CD4-positive, alpha-beta memory T cell (primary cell): ENCODE measurements at regions of chr14 and their contacts with region 1.

Region 1: GRCh38 chr14:21092273-21093011 is 6.0 kb downstream of the ZNF219 start:
- DNase-seq: peak; percentile 86 to 91 (median 90)
- H3K4me3 ChIP-seq: no peak overlapping the region
- H3K4me3 Mint-ChIP-seq: peak overlapping the region in 2 of 8 donors; percentile 2 to 72
- H3K27ac ChIP-seq: peak overlapping the region; percentile 17
- H3K27ac Mint-ChIP-seq: peak overlapping the region in 6 of 7 donors; percentile 79 to 97 (median 94)
- H3K4me1 ChIP-seq: peaks cover 21% of the 10 kb centered on the region
- H3K4me1 Mint-ChIP-seq: peaks cover 17 to 50% (median 29%) of the 10 kb centered on the region in 4 donors
- H3K27me3 ChIP-seq: no peaks in the 10 kb centered on the region
- H3K27me3 Mint-ChIP-seq: no peaks in the 10 kb centered on the region

Region 2: DNA sequence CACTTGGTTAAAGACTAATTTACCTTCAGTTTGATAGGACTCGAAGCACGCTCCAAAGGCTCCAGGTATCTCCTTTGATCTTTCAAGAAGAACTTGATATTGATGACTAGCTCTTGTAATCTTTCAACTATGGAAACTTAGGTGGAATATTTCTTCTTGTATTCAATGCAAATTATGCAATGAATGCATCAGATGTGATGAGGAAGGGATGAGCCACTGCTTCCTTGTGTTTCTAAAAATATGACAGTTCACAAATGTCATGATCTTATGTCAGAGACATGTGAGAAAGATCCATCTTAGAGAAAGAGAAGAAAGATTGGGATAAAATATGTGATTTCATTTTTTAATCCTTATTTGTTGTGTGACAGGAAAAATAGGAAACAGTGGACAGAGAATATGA is 541.5 kb before region 1 on chr14:
- CTCF ChIA-PET with region 1: no interaction called
- POLR2A ChIA-PET with region 1: no interaction called
- intact Hi-C with region 1: no loop called
- DNase-seq: no peak
- H3K4me3 ChIP-seq: no peak overlapping the region
- H3K4me3 Mint-ChIP-seq: no peak overlapping the region
- H3K27ac ChIP-seq: no peak overlapping the region
- H3K27ac Mint-ChIP-seq: no peak overlapping the region
- H3K4me1 ChIP-seq: no peaks in the 10 kb centered on the region
- H3K4me1 Mint-ChIP-seq: no peaks in the 10 kb centered on the region
- H3K27me3 ChIP-seq: no peaks in the 10 kb centered on the region
- H3K27me3 Mint-ChIP-seq: peaks cover 2 to 3% of the 10 kb centered on the region in 2 donors

Region 3: GRCh38 chr14:21032326-21033132 is 59.9 kb before region 1 on chr14:
- CTCF ChIA-PET with region 1: interaction called, 12 read pairs
- POLR2A ChIA-PET with region 1: no interaction called
- intact Hi-C with region 1: no loop called
- DNase-seq: no peak
- H3K4me3 ChIP-seq: no peak overlapping the region
- H3K4me3 Mint-ChIP-seq: no peak overlapping the region
- H3K27ac ChIP-seq: no peak overlapping the region
- H3K27ac Mint-ChIP-seq: no peak overlapping the region
- H3K4me1 ChIP-seq: no peaks in the 10 kb centered on the region
- H3K4me1 Mint-ChIP-seq: no peaks in the 10 kb centered on the region
- H3K27me3 ChIP-seq: no peaks in the 10 kb centered on the region
- H3K27me3 Mint-ChIP-seq: peaks cover 1 to 3% of the 10 kb centered on the region in 2 donors

Region 4: GRCh38 chr14:21049271-21049673 is 43.2 kb before region 1 on chr14:
- CTCF ChIA-PET with region 1: interaction called, 14 read pairs
- POLR2A ChIA-PET with region 1: no interaction called
- intact Hi-C with region 1: no loop called
- DNase-seq: no peak
- H3K4me3 ChIP-seq: no peak overlapping the region
- H3K4me3 Mint-ChIP-seq: no peak overlapping the region
- H3K27ac ChIP-seq: no peak overlapping the region
- H3K27ac Mint-ChIP-seq: no peak overlapping the region
- H3K4me1 ChIP-seq: peaks cover 8% of the 10 kb centered on the region
- H3K4me1 Mint-ChIP-seq: peaks cover 6 to 14% (median 9%) of the 10 kb centered on the region in 4 donors
- H3K27me3 ChIP-seq: peaks cover 3% of the 10 kb centered on the region
- H3K27me3 Mint-ChIP-seq: peaks cover 3 to 8% of the 10 kb centered on the region in 2 donors

Region 5: DNA sequence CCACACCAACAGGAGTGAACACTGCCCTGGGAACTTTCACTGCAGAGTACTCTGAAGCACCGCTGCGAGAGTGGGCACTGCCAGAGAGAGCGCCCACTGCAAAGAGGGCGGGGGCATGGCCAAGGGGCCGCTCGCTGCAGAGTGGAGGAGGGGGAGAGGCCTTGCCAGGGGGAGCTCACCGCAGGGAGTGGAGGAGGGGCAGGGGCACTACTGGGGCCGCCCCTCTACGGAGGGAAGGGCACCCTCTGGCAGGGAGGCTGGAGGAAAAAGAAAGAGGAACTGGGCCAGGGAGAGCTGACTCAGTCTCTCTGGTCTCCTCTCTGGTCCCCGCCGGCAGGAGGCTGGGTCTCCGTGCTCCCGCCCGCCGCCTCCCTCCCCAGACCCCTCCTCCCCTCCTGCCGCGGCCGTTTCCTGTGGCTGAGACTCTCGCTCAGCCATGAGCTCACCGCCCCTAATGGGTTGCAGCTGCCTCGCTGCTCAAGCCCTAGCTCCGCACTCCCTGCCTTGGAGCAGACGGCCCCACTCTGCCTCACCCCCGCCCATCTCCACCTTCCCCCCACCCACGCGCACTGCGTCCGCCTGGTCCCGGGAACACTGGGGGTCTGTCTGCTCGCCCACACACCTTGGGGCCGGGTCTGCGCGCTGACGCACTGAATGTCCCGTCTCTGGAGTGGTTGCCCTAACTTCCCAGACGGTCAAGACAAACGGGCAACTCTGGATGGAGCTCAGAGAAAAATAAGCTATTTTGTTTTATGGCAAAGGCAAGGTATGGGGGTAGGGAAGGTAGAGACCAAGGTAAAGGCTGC is 21.0 kb before region 1 on chr14:
- CTCF ChIA-PET with region 1: interaction called, 119 read pairs
- POLR2A ChIA-PET with region 1: interaction called, 22 read pairs
- intact Hi-C with region 1: loop called (anchors 1 kb)
- DNase-seq: peak in 4 of 5 donors; percentile 23 to 75 (median 32)
- H3K4me3 ChIP-seq: peak overlapping the region in 1 of 2 donors; percentile 42
- H3K4me3 Mint-ChIP-seq: peak overlapping the region; percentile 80 to 90 (median 86)
- H3K27ac ChIP-seq: peak overlapping the region; percentile 25
- H3K27ac Mint-ChIP-seq: peak overlapping the region in 6 of 7 donors; percentile 77 to 88 (median 83)
- H3K4me1 ChIP-seq: peaks cover 35% of the 10 kb centered on the region
- H3K4me1 Mint-ChIP-seq: peaks cover 22 to 41% (median 30%) of the 10 kb centered on the region in 4 donors
- H3K27me3 ChIP-seq: peaks cover 52% of the 10 kb centered on the region
- H3K27me3 Mint-ChIP-seq: peaks cover 29 to 50% of the 10 kb centered on the region in 2 donors